SK-N-SH (cell line): ENCODE measurements at regions of chr9 and their contacts with region 1.

Region 1: DNA sequence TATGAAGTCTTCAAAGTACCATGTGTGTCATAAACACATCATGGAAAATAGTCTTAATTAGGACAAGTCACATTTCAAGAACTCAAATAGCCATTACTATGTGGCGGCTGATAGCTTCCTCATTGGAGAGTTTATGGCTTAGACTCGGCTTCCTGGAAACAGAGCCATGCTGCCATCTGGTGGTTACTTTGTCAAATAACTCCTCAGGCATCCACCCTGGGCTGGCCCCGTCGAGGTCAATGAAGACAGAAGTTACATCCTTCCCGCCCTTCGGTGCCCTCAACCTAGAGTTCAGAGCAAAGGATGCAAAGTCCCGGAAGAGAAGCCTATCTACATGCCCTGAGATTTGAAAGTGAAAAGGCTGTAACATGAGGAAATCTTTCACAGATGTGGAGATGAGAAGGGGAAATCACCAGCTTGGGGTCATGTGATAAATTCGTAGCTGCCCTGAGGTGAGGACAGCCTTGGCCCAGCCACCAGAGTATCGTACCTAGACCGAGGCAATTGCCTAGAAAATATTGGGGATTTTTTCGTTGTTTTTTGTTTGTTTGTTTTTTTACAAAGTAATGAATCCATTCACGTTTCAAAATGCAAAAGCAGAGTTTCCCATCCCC is 45.5 kb upstream of the ZNF169 start:
- DNase-seq: peak; percentile 80
- H3K4me3 ChIP-seq: no peak overlapping the region
- H3K27ac ChIP-seq: no peak overlapping the region
- H3K4me1 ChIP-seq: peaks cover 5 to 6% of the 10 kb centered on the region in 2 experiments; a peak in 1 of 4 replicates
- H3K27me3 ChIP-seq: no peaks in the 10 kb centered on the region
- CTCF ChIP-seq: peak; percentile 85
- EP300 ChIP-seq: no peak
- RAD21 ChIP-seq: peak; percentile 99

Region 2: GRCh38 chr9:93721417-93721965 is 492.1 kb before region 1 on chr9:
- CTCF ChIA-PET with region 1: no interaction called
- POLR2A ChIA-PET with region 1: no interaction called
- DNase-seq: no peak
- H3K4me3 ChIP-seq: no peak overlapping the region
- H3K27ac ChIP-seq: no peak overlapping the region
- H3K4me1 ChIP-seq: no peaks in the 10 kb centered on the region
- H3K27me3 ChIP-seq: no peaks in the 10 kb centered on the region
- CTCF ChIP-seq: no peak
- EP300 ChIP-seq: no peak
- RAD21 ChIP-seq: no peak

Region 3: DNA sequence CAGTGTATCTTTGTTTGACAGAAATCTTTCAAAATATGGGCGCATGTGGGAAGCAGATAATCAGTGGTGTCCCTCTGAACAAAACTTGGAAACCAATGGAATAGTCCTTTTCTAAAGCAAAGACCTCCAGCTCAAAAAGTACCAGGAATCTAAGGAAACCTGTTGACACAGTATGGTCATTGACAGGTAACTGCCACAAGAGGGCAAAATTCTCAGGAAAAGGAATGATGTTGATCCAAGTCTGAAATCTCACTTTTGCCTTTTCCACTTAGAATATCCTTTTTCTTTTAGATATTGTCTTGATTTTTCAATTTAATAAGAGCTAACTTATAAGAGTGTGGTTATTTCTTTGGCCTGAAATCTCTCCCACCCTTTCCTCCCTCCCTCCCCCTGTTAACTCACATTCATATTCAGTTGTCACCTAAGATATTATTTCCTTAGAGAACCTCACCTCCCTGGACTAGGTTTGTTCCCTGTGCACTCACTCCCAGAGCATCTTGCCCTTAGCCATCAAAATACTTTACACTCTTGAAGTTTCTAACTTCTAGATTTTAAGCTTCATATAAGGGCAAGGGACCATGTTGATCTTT is 199.5 kb before region 1 on chr9:
- CTCF ChIA-PET with region 1: interaction called, 209 read pairs
- POLR2A ChIA-PET with region 1: no interaction called
- DNase-seq: peak; percentile 46
- H3K4me3 ChIP-seq: no peak overlapping the region
- H3K27ac ChIP-seq: no peak overlapping the region
- H3K4me1 ChIP-seq: no peaks in the 10 kb centered on the region; a peak in 1 of 4 replicates
- H3K27me3 ChIP-seq: no peaks in the 10 kb centered on the region
- CTCF ChIP-seq: peak; percentile 67
- EP300 ChIP-seq: no peak
- RAD21 ChIP-seq: peak; percentile 61

Region 4: GRCh38 chr9:94065535-94065961 is 148.1 kb before region 1 on chr9:
- CTCF ChIA-PET with region 1: interaction called, 142 read pairs
- POLR2A ChIA-PET with region 1: interaction called, 3 read pairs
- DNase-seq: peak; percentile 46
- H3K4me3 ChIP-seq: no peak overlapping the region; a peak in 1 of 4 replicates
- H3K27ac ChIP-seq: no peak overlapping the region
- H3K4me1 ChIP-seq: no peaks in the 10 kb centered on the region
- H3K27me3 ChIP-seq: no peaks in the 10 kb centered on the region
- CTCF ChIP-seq: peak; percentile 89
- EP300 ChIP-seq: no peak
- RAD21 ChIP-seq: peak; percentile 86

Region 5: GRCh38 chr9:94166237-94166963 is 47.2 kb before region 1 on chr9:
- CTCF ChIA-PET with region 1: interaction called, 11 read pairs
- POLR2A ChIA-PET with region 1: no interaction called
- DNase-seq: peak; percentile 95
- H3K4me3 ChIP-seq: peak overlapping the region; percentile 79 to 87
- H3K27ac ChIP-seq: peak overlapping the region; percentile 94 to 98
- H3K4me1 ChIP-seq: peaks cover 17 to 22% of the 10 kb centered on the region in 2 experiments; a peak in 3 of 4 replicates
- H3K27me3 ChIP-seq: no peaks in the 10 kb centered on the region
- CTCF ChIP-seq: no peak
- EP300 ChIP-seq: peak in 1 of 2 experiments; percentile 41; a peak in 1 of 4 replicates
- RAD21 ChIP-seq: no peak

Region 6: GRCh38 chr9:94199776-94200175 is 13.8 kb before region 1 on chr9:
- CTCF ChIA-PET with region 1: interaction called, 15 read pairs
- POLR2A ChIA-PET with region 1: no interaction called
- DNase-seq: no peak
- H3K4me3 ChIP-seq: no peak overlapping the region
- H3K27ac ChIP-seq: no peak overlapping the region
- H3K4me1 ChIP-seq: no peaks in the 10 kb centered on the region
- H3K27me3 ChIP-seq: no peaks in the 10 kb centered on the region
- CTCF ChIP-seq: no peak
- EP300 ChIP-seq: no peak
- RAD21 ChIP-seq: no peak

Region 7: DNA sequence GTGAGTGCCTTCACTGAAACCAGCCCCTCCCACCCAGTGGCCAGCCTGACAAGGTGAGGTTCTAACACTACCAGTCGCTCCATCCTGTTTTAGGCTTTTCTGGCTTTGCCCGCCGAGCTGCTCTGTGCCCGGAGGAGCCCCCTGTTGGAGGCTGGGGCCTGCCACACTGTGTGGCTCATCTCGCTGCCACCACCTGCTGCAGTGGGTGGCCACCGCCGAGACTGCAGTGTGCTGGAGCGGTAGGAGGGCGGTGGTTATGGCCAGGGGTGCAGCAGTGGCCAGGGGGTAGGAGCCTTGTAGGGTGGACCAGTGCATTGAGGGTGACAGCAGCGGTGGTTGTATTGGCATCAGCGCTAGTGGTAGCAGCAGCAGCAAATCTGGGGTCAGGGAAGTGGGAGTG is 266.6 kb after region 1 on chr9:
- CTCF ChIA-PET with region 1: no interaction called
- POLR2A ChIA-PET with region 1: no interaction called
- DNase-seq: no peak
- H3K4me3 ChIP-seq: no peak overlapping the region
- H3K27ac ChIP-seq: no peak overlapping the region
- H3K4me1 ChIP-seq: no peaks in the 10 kb centered on the region
- H3K27me3 ChIP-seq: no peaks in the 10 kb centered on the region
- CTCF ChIP-seq: no peak
- EP300 ChIP-seq: no peak
- RAD21 ChIP-seq: no peak

Region 8: DNA sequence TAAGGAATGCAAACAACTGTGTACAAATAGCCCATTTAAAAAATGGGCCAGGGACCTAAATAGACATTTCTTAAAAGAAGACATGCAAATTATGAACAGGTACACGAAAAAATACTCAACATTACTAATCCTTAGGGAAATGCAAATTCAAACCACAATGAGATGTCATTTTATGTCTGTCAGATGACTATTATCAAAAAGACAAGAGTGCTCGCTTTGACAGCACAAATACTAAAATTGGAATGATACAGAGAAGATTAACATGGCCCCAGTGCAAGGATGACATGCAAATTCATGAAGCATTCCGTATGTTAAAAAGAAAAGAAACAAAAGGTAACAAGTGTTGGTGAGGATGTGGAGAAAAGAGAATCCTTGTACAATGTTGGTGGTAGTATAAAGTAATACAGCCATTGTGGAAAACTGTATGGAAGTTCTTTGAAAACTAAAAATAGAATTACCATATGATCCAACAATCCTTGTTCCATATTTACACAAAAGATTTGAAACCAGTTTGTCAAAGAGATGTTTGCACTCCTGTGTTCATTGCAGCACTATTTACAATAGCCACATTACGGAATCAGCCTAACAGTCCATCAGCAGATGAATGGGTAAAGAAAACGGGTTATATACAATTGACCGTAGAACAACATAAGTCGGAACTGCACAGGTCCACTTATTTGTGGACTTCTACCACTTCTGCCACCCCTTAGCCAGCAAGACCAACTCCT is 294.1 kb after region 1 on chr9:
- CTCF ChIA-PET with region 1: no interaction called
- POLR2A ChIA-PET with region 1: no interaction called
- DNase-seq: no peak
- H3K4me3 ChIP-seq: no peak overlapping the region
- H3K27ac ChIP-seq: no peak overlapping the region
- H3K4me1 ChIP-seq: peaks cover 0 to 12% of the 10 kb centered on the region in 2 experiments; a peak in 2 of 4 replicates
- H3K27me3 ChIP-seq: no peaks in the 10 kb centered on the region
- CTCF ChIP-seq: no peak
- EP300 ChIP-seq: no peak
- RAD21 ChIP-seq: no peak